Activated naive CD4-positive, alpha-beta T cell treated with anti-CD3 and anti-CD28 coated beads for 36 hours (primary cell): ENCODE measurements at regions of chr2 and their contacts with region 1.

Region 1: DNA sequence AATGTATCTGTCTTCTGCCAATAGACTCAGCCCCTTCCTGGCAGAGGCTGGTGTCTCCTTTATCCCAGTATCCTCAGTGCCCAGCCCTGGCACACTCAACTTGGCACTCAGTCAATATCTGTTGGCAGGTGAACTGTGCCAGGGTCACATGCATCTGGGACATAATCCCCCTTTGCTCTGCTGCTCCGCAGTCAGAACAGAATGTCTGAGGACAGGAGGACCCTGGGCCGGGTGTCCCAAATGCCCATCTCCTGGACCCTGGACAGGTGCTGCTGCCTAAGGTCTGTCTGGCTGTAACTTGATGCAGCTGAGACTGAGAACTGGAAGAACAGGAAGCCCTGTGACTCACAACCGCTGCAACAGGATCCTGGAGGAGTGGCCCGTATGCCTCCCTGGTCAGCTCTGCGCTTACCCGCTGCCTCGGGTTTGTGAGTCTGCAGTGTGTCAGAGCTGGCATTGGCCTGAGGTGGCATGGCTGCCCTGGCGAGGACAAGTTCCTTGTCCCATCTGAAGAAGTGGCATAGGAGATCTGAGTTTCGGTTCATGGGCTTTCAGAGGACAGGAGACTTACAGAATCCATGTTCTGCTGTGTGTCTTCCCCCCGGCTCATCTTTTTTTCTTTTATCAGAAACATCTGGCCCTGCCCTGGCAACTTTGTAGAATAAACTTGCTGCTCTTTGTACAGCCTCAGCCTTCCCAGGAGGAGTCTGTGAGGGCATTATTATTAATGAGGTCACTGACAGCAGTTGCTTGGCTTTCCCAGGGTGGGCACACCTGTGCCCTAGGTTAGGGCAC is 11.5 kb downstream of the HK2 start:
- DNase-seq: peak; percentile 61
- H3K4me3 Mint-ChIP-seq: no peak overlapping the region
- H3K27ac Mint-ChIP-seq: peak overlapping the region; percentile 33
- H3K4me1 Mint-ChIP-seq: peaks cover 95% of the 10 kb centered on the region
- H3K27me3 Mint-ChIP-seq: no peaks in the 10 kb centered on the region

Region 2: DNA sequence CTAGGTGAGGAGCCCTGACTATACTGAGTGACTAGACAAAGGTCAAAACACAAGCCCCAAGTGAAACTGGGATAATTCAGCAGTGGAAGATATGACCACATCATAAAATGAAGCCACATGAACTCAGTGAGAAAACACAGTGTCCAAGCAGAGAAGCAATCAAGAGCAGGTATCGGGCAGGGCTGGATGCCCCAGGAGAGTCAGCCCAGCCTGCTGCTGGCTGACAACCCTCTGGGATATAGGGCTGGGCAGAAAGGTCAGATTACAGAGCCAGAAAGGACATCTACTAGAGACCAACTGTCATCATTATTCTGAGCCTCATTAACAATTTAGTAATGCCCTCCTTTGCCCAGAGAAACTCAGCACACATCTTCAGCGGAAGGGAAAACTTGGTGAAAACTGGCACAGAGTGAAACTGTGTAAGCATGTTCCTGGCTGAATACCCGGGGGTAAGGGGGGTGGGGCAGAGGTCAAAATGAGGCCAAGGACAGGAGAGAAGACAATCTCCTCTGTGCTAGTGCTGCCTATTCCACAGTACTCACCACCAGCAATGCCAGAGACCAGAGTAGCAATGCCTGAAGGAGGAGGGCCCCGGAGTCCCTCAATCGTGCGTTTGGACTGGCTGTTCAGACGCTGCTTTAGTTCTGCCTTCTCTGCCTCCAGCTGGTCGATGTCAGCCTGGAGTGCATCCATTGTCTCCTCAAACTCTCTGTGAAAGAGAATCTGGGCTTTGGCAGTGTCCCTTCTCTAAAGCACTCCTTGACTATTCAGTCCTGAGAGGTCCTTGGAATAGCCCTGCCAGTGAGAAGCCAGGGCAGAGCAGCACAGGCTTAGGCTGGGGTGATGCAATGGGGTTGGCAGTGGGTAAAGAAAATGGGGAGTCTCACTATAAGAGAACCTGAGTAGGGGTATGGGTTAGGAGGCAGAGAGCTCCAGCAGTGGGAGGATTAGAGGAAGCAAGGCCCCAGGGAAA is 480.6 kb before region 1 on chr2:
- CTCF ChIA-PET with region 1: no interaction called
- intact Hi-C with region 1: no loop called
- DNase-seq: no peak
- H3K4me3 Mint-ChIP-seq: no peak overlapping the region
- H3K27ac Mint-ChIP-seq: no peak overlapping the region
- H3K4me1 Mint-ChIP-seq: no peaks in the 10 kb centered on the region
- H3K27me3 Mint-ChIP-seq: no peaks in the 10 kb centered on the region

Region 3: GRCh38 chr2:74507145-74507925 is 338.1 kb before region 1 on chr2 and contains the start of gene PCGF1:
- CTCF ChIA-PET with region 1: no interaction called
- intact Hi-C with region 1: loop called (anchors 2 kb)
- DNase-seq: peak; percentile 99
- H3K4me3 Mint-ChIP-seq: peak within 1 kb of the TSS; percentile 91
- H3K27ac Mint-ChIP-seq: peak within 1 kb of the TSS; percentile 98
- H3K4me1 Mint-ChIP-seq: peaks cover 40% of the 10 kb centered on the region
- H3K27me3 Mint-ChIP-seq: peaks cover 41% of the 10 kb centered on the region
- total RNA-seq, gene PCGF1: 21.1 to 24.4 TPM

Region 4: GRCh38 chr2:74566754-74567085 is 278.7 kb before region 1 on chr2:
- CTCF ChIA-PET with region 1: no interaction called
- intact Hi-C with region 1: loop called (anchors 5 kb)
- DNase-seq: no peak
- H3K4me3 Mint-ChIP-seq: peak overlapping the region; percentile 31
- H3K27ac Mint-ChIP-seq: peak overlapping the region; percentile 87
- H3K4me1 Mint-ChIP-seq: peaks cover 35% of the 10 kb centered on the region
- H3K27me3 Mint-ChIP-seq: peaks cover 11% of the 10 kb centered on the region

Region 5: DNA sequence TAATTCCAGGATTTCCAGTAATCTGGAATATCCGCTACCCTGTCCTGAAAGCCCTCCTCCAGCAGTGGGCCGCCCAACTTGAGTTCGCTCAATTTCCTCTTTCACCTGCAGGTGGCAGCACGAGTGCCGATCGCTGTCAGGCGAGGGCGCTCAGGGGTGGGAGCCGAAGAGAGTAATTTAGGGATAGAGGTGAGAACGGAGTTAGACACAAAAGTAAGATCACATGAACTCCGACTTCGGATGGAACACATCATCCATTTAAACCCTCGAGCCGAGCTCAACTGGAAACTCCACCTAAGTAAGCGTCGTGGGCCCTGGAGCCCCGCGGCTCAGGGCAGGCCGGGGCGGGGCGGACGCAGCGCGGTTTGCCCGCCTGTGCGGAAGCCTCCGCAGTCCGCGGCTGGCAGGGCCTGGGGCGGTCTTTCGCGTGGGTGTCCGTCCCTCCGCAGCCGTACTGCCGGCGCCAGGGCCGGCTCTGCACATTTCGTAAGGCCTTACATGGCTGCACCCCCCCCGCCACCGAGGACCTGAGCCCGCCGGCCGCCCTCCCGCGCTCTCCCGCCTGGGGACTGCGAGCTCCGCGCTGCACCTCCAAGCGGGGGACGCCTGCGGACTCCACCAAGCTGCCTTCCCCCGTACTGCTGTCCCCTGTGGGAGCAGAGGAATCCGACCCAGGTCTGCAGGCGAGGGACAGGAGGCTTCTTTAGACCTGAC is 130.2 kb before region 1 on chr2:
- CTCF ChIA-PET with region 1: interaction called, 3 read pairs
- intact Hi-C with region 1: loop called (anchors 1 kb)
- DNase-seq: peak; percentile 88
- H3K4me3 Mint-ChIP-seq: peak overlapping the region; percentile 81
- H3K27ac Mint-ChIP-seq: no peak overlapping the region
- H3K4me1 Mint-ChIP-seq: peaks cover 7% of the 10 kb centered on the region
- H3K27me3 Mint-ChIP-seq: peaks cover 11% of the 10 kb centered on the region

Region 6: DNA sequence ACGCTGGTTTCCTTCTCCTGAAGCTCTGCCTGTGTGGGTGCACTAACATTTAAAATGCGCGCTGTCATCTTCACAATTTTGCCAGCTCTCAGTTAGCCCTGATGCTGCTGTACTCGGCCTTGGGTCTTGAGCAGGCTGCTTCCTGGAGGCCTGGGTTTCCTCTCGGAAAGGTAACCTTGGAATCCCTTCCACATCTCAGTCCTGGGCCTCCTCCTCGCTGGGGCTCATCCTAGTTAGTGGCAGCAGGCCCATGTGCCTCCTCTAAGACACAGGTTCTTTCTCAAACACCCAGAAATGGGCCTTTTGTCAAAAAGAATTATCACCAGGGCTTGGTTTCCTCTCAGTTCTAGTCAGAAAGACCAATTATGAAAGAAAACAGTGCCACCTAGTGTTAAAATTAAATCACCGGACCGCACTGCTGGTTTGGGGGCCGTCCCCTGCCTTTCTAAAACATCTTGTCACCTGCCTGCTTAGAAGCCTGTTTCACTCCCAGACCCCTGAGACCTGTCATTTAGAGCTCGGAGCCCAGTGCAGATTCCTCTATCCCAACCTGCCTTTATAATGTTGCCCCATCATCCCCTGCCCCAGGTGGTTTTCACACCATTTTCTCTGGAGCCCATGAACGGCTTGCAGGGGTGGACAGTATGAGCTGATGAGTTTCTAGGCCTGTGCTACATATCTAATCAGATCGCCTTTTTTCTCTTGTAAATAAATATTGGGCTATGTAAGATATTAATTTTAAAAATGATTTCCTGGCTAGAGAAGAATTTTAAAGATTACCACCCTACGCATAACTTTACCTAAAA is 30.9 kb after region 1 on chr2:
- CTCF ChIA-PET with region 1: interaction called, 4 read pairs
- intact Hi-C with region 1: loop called (anchors 2 kb)
- DNase-seq: peak; percentile 62
- H3K4me3 Mint-ChIP-seq: no peak overlapping the region
- H3K27ac Mint-ChIP-seq: no peak overlapping the region
- H3K4me1 Mint-ChIP-seq: no peaks in the 10 kb centered on the region
- H3K27me3 Mint-ChIP-seq: no peaks in the 10 kb centered on the region

Region 7: GRCh38 chr2:74911061-74911460 is 65.6 kb after region 1 on chr2:
- CTCF ChIA-PET with region 1: no interaction called
- intact Hi-C with region 1: no loop called
- DNase-seq: no peak
- H3K4me3 Mint-ChIP-seq: no peak overlapping the region
- H3K27ac Mint-ChIP-seq: no peak overlapping the region
- H3K4me1 Mint-ChIP-seq: peaks cover 9% of the 10 kb centered on the region
- H3K27me3 Mint-ChIP-seq: peaks cover 43% of the 10 kb centered on the region

Region 8: GRCh38 chr2:75710577-75711253 is 865.3 kb after region 1 on chr2 and contains the start of gene GCFC2:
- CTCF ChIA-PET with region 1: no interaction called
- intact Hi-C with region 1: loop called (anchors 2 kb)
- DNase-seq: peak; percentile 87
- H3K4me3 Mint-ChIP-seq: peak within 1 kb of the TSS; percentile 91
- H3K27ac Mint-ChIP-seq: peak within 1 kb of the TSS; percentile 97
- H3K4me1 Mint-ChIP-seq: peaks cover 28% of the 10 kb centered on the region
- H3K27me3 Mint-ChIP-seq: no peaks in the 10 kb centered on the region
- total RNA-seq, gene GCFC2: 30.5 to 36.4 TPM